Mammary epithelial cell (primary cell): ENCODE measurements at regions of chr1 and their contacts with region 1.

Region 1: DNA sequence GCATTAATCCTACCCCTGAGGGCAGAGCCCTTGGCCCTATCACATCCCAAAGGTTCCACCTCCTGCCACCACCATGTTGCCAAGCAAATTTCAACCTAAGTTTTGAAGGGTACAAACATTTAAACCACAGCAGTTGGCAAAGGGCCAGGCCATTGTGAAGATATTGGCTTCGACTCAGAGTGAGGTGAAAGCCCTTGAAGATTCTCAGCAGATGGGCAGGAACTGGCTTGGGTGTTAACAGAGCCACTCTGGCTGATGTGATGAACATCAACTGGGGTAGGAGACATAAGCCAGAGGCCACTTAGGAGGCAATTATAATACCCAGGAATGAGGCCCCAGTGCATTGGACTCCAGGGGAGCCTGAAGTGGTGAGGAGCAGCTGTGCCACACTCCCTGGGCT is 207.7 kb upstream of the KAZN start:
- DNase-seq: no peak
- H3K4me3 ChIP-seq: no peak overlapping the region
- H3K27ac ChIP-seq: no peak overlapping the region
- H3K4me1 ChIP-seq: no peaks in the 10 kb centered on the region
- H3K27me3 ChIP-seq: no peaks in the 10 kb centered on the region
- CTCF ChIP-seq: no peak

Region 2: GRCh38 chr1:14300991-14301703 is 89.7 kb before region 1 on chr1:
- CTCF ChIA-PET with region 1: no interaction called
- dilution Hi-C with region 1: no loop called
- in situ Hi-C with region 1: no loop called
- intact Hi-C with region 1: no loop called
- DNase-seq: no peak
- H3K4me3 ChIP-seq: no peak overlapping the region
- H3K27ac ChIP-seq: no peak overlapping the region
- H3K4me1 ChIP-seq: no peaks in the 10 kb centered on the region
- H3K27me3 ChIP-seq: no peaks in the 10 kb centered on the region
- CTCF ChIP-seq: no peak

Region 3: GRCh38 chr1:14328670-14329069 is 62.1 kb before region 1 on chr1:
- CTCF ChIA-PET with region 1: no interaction called
- dilution Hi-C with region 1: loop called (anchors 5 kb)
- in situ Hi-C with region 1: no loop called
- intact Hi-C with region 1: no loop called
- DNase-seq: no peak
- H3K4me3 ChIP-seq: no peak overlapping the region
- H3K27ac ChIP-seq: no peak overlapping the region
- H3K4me1 ChIP-seq: no peaks in the 10 kb centered on the region
- H3K27me3 ChIP-seq: no peaks in the 10 kb centered on the region
- CTCF ChIP-seq: no peak

Region 4: GRCh38 chr1:14421977-14422609 is 31.3 kb after region 1 on chr1:
- CTCF ChIA-PET with region 1: no interaction called
- dilution Hi-C with region 1: no loop called
- in situ Hi-C with region 1: no loop called
- intact Hi-C with region 1: no loop called
- DNase-seq: no peak
- H3K4me3 ChIP-seq: no peak overlapping the region
- H3K27ac ChIP-seq: no peak overlapping the region
- H3K4me1 ChIP-seq: no peaks in the 10 kb centered on the region
- H3K27me3 ChIP-seq: no peaks in the 10 kb centered on the region
- CTCF ChIP-seq: no peak

Region 5: GRCh38 chr1:14435368-14436023 is 44.7 kb after region 1 on chr1:
- CTCF ChIA-PET with region 1: no interaction called
- dilution Hi-C with region 1: loop called (anchors 5 kb)
- in situ Hi-C with region 1: no loop called
- intact Hi-C with region 1: no loop called
- DNase-seq: no peak
- H3K4me3 ChIP-seq: no peak overlapping the region
- H3K27ac ChIP-seq: no peak overlapping the region
- H3K4me1 ChIP-seq: no peaks in the 10 kb centered on the region
- H3K27me3 ChIP-seq: peaks cover 3% of the 10 kb centered on the region
- CTCF ChIP-seq: peak in 1 of 2 donors; percentile 12

Region 6: GRCh38 chr1:14606632-14607031 is 215.8 kb after region 1 on chr1:
- CTCF ChIA-PET with region 1: no interaction called
- dilution Hi-C with region 1: no loop called
- in situ Hi-C with region 1: no loop called
- intact Hi-C with region 1: no loop called
- DNase-seq: no peak
- H3K4me3 ChIP-seq: no peak overlapping the region
- H3K27ac ChIP-seq: no peak overlapping the region
- H3K4me1 ChIP-seq: no peaks in the 10 kb centered on the region
- H3K27me3 ChIP-seq: no peaks in the 10 kb centered on the region
- CTCF ChIP-seq: peak; percentile 49 to 89

Region 7: GRCh38 chr1:14653461-14653960 is 262.7 kb after region 1 on chr1:
- CTCF ChIA-PET with region 1: no interaction called
- dilution Hi-C with region 1: no loop called
- in situ Hi-C with region 1: no loop called
- intact Hi-C with region 1: no loop called
- DNase-seq: peak; percentile 38
- H3K4me3 ChIP-seq: no peak overlapping the region
- H3K27ac ChIP-seq: no peak overlapping the region
- H3K4me1 ChIP-seq: no peaks in the 10 kb centered on the region
- H3K27me3 ChIP-seq: no peaks in the 10 kb centered on the region
- CTCF ChIP-seq: no peak